ENCODE measurements at regions of chr2 and their contacts with region 1.

Region 1: DNA sequence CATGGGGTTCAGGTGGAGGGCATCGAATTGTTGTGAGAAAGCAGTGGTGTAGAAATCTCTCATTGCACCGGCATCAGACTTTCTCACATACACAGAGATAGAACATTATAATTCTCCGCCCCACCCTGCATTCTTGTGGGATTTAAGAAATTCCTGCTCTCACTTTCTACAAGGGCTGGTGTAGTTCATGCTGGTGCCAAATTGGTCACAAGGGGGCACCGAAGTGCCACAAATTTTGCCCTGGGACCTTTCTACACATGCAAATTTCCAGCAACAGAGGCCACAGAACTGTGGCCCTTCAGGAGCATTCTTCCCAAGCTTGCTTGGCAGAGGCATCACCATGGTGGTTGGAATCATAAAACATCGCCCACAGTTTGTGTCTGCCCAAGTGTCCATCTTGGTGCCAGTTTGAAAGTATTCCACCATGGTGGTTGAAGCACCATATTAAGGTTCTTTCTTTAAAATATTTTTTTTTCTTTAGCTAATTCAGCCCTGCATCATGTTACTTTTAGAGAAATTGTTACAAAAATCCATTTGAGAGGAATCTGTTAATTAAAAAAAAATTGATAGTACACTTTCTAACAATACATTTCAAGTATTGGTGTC is 521.2 kb upstream of the FANCL start:
- DNase-seq: peak; percentile 59 to 77
- H3K4me3 ChIP-seq: no peak overlapping the region
- H3K4me3 Mint-ChIP-seq: no peak overlapping the region
- H3K27ac Mint-ChIP-seq: no peak overlapping the region
- H3K4me1 ChIP-seq: no peaks in the 10 kb centered on the region
- H3K4me1 Mint-ChIP-seq: no peaks in the 10 kb centered on the region
- H3K27me3 ChIP-seq: no peaks in the 10 kb centered on the region
- H3K27me3 Mint-ChIP-seq: peaks cover 2% of the 10 kb centered on the region
- CTCF ChIP-seq: peak; percentile 69 to 72

Region 2: GRCh38 chr2:58571181-58571852 is 191.0 kb before region 1 on chr2:
- CTCF ChIA-PET with region 1: no interaction called
- POLR2A ChIA-PET with region 1: no interaction called
- intact Hi-C with region 1: loop called (anchors 1 kb)
- DNase-seq: peak; percentile 63 to 70
- H3K4me3 ChIP-seq: no peak overlapping the region
- H3K4me3 Mint-ChIP-seq: no peak overlapping the region
- H3K27ac Mint-ChIP-seq: no peak overlapping the region
- H3K4me1 ChIP-seq: peaks cover 9% of the 10 kb centered on the region; the same call in 1 of the 2 replicates
- H3K4me1 Mint-ChIP-seq: no peaks in the 10 kb centered on the region
- H3K27me3 ChIP-seq: no peaks in the 10 kb centered on the region
- H3K27me3 Mint-ChIP-seq: peaks cover 6% of the 10 kb centered on the region
- CTCF ChIP-seq: peak; percentile 56 to 76

Region 3: GRCh38 chr2:58686776-58687175 is 75.5 kb before region 1 on chr2:
- CTCF ChIA-PET with region 1: no interaction called
- POLR2A ChIA-PET with region 1: no interaction called
- intact Hi-C with region 1: no loop called
- DNase-seq: no peak
- H3K4me3 ChIP-seq: no peak overlapping the region
- H3K4me3 Mint-ChIP-seq: no peak overlapping the region
- H3K27ac Mint-ChIP-seq: no peak overlapping the region
- H3K4me1 ChIP-seq: no peaks in the 10 kb centered on the region
- H3K4me1 Mint-ChIP-seq: no peaks in the 10 kb centered on the region
- H3K27me3 ChIP-seq: no peaks in the 10 kb centered on the region
- H3K27me3 Mint-ChIP-seq: peaks cover 3% of the 10 kb centered on the region
- CTCF ChIP-seq: no peak

Region 4: DNA sequence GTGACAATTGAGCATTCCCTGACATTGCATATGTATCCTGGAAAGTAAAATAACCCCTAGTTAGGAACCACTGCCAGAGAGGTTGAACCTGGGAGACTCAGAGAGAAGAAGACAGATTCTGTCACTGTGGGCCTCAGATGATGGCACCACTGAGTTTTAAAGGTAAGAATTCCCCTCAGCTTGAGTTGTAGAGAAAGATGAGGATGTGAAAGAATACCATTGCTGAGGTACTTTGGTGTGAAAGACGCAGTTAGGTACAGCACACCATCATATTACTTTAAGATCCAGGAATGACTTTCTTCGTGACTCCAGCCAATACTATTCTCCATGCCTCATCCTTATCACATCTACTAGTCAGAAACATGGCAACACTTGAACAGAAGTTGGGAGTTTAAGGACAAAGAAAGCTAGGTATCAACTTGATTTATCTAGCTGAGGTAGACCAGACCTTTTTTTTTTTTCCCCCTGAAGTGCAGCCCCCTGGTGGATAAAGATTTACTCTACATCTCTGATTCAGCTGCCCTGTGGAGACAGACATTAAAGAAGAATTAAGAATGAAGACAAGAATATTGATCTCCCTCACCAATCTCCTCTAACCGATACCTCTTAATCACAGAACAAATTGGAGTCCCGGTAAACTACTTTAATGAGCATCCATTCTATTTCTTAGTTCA is 109.3 kb after region 1 on chr2:
- CTCF ChIA-PET with region 1: interaction called, 3 read pairs
- POLR2A ChIA-PET with region 1: no interaction called
- intact Hi-C with region 1: loop called (anchors 1 kb)
- DNase-seq: peak in 1 of 2 experiments; percentile 28
- H3K4me3 ChIP-seq: no peak overlapping the region
- H3K4me3 Mint-ChIP-seq: no peak overlapping the region
- H3K27ac Mint-ChIP-seq: no peak overlapping the region
- H3K4me1 ChIP-seq: no peaks in the 10 kb centered on the region; the same call in 1 of the 2 replicates
- H3K4me1 Mint-ChIP-seq: no peaks in the 10 kb centered on the region
- H3K27me3 ChIP-seq: no peaks in the 10 kb centered on the region
- H3K27me3 Mint-ChIP-seq: no peaks in the 10 kb centered on the region
- CTCF ChIP-seq: peak; percentile 22 to 28

Region 5: GRCh38 chr2:58890874-58891525 is 128.7 kb after region 1 on chr2:
- CTCF ChIA-PET with region 1: interaction called, 4 read pairs
- POLR2A ChIA-PET with region 1: no interaction called
- intact Hi-C with region 1: loop called (anchors 1 kb)
- DNase-seq: no peak
- H3K4me3 ChIP-seq: no peak overlapping the region
- H3K4me3 Mint-ChIP-seq: no peak overlapping the region
- H3K27ac Mint-ChIP-seq: no peak overlapping the region
- H3K4me1 ChIP-seq: no peaks in the 10 kb centered on the region
- H3K4me1 Mint-ChIP-seq: peaks cover 12% of the 10 kb centered on the region
- H3K27me3 ChIP-seq: no peaks in the 10 kb centered on the region
- H3K27me3 Mint-ChIP-seq: peaks cover 5% of the 10 kb centered on the region
- CTCF ChIP-seq: peak in 1 of 2 experiments; percentile 39

Region 6: DNA sequence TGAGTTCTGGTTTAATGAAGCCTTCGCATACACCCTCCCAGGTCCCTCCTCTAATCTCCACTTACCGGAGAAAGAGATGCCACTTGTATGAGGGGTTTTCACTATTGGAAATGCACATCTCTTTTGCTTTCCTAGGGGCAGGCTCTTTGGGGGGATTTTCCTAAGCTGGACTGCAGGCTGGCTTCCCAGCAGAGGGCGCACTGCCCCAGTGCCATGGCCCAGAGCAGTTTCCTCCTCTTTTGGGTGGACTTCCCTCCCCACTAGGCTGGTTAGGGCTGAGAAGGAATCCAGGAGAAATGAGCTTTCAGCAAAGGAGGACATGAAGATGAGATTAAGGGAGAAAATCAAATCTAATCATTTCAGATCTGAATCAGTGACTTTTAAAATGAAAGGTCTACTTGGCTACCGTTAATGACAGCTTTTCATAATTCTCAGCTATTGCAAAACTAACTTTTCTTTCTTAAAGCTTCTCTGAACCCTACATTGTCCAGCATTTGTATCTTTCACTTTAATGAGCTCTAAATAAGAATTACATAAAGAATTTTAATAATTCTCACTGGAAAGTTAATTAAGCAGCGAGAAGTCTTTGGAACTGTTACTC is 263.0 kb after region 1 on chr2:
- CTCF ChIA-PET with region 1: no interaction called
- POLR2A ChIA-PET with region 1: no interaction called
- intact Hi-C with region 1: loop called (anchors 2 kb)
- DNase-seq: peak; percentile 39 to 57
- H3K4me3 ChIP-seq: no peak overlapping the region
- H3K4me3 Mint-ChIP-seq: no peak overlapping the region
- H3K27ac Mint-ChIP-seq: no peak overlapping the region
- H3K4me1 ChIP-seq: no peaks in the 10 kb centered on the region
- H3K4me1 Mint-ChIP-seq: no peaks in the 10 kb centered on the region
- H3K27me3 ChIP-seq: no peaks in the 10 kb centered on the region
- H3K27me3 Mint-ChIP-seq: peaks cover 2% of the 10 kb centered on the region
- CTCF ChIP-seq: peak; percentile 76 to 89

Region 7: DNA sequence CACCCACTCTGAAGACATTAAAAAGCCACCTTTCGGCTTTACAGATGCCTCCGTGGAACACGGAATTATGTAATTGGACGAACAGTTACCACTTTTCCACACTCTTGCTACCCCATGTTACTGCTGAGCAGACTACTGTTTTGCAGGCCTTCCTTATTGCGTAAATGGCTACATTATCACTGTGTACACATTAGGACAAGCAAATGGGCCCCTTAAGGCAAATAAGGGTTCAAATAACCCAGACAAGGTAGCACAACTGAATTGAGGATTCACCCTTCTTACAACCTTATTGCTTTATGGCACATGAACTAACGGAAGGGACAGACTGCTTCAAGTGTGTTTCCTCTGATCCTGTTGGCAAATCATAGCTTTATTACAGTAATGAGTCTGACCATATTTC is 311.0 kb after region 1 on chr2:
- CTCF ChIA-PET with region 1: no interaction called
- POLR2A ChIA-PET with region 1: no interaction called
- intact Hi-C with region 1: loop called (anchors 5 kb)
- DNase-seq: peak in 1 of 2 experiments; percentile 2
- H3K4me3 ChIP-seq: no peak overlapping the region
- H3K4me3 Mint-ChIP-seq: no peak overlapping the region
- H3K27ac Mint-ChIP-seq: no peak overlapping the region
- H3K4me1 ChIP-seq: peaks cover 5% of the 10 kb centered on the region; the same call in 1 of the 2 replicates
- H3K4me1 Mint-ChIP-seq: no peaks in the 10 kb centered on the region
- H3K27me3 ChIP-seq: no peaks in the 10 kb centered on the region
- H3K27me3 Mint-ChIP-seq: peaks cover 6% of the 10 kb centered on the region
- CTCF ChIP-seq: no peak

Region 8: DNA sequence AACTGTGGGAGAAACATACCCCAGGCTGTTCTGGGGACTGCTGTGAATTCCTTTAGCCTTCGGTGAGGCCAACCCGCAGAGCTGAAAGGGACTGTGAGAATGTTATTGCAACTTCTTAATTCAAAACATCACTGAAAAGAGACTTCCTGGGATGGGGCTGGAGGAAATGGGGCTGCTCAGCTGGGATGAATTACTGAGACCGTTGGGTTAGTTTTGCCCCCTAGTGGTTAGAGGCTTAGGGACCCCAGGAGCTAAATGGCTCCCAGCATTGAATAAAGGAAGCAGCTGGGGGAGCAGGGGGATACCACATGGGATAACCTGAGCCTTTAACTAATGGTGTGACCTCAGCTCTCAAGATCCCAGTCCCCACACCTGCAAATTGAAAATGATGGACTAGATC is 420.0 kb after region 1 on chr2:
- CTCF ChIA-PET with region 1: no interaction called
- POLR2A ChIA-PET with region 1: no interaction called
- intact Hi-C with region 1: loop called (anchors 1 kb)
- DNase-seq: peak in 1 of 2 experiments; percentile 38
- H3K4me3 ChIP-seq: no peak overlapping the region
- H3K4me3 Mint-ChIP-seq: no peak overlapping the region
- H3K27ac Mint-ChIP-seq: no peak overlapping the region
- H3K4me1 ChIP-seq: no peaks in the 10 kb centered on the region
- H3K4me1 Mint-ChIP-seq: no peaks in the 10 kb centered on the region
- H3K27me3 ChIP-seq: no peaks in the 10 kb centered on the region
- H3K27me3 Mint-ChIP-seq: peaks cover 2% of the 10 kb centered on the region
- CTCF ChIP-seq: peak; percentile 43 to 65

Measured in Caco-2 (cell line).